Ovary (tissue), 10 donors: ENCODE measurements at regions of chr21 and their contacts with region 1.

Region 1: GRCh38 chr21:37380349-37381323 is 14.1 kb downstream of the DYRK1A start:
- DNase-seq: no peak
- H3K4me3 ChIP-seq: no peak overlapping the region
- H3K27ac ChIP-seq: no peak overlapping the region
- H3K4me1 ChIP-seq: peaks cover 15% of the 10 kb centered on the region
- H3K27me3 ChIP-seq: no peaks in the 10 kb centered on the region
- CTCF ChIP-seq: no peak
- EP300 ChIP-seq: no peak
- POLR2A ChIP-seq: no peak

Region 2: DNA sequence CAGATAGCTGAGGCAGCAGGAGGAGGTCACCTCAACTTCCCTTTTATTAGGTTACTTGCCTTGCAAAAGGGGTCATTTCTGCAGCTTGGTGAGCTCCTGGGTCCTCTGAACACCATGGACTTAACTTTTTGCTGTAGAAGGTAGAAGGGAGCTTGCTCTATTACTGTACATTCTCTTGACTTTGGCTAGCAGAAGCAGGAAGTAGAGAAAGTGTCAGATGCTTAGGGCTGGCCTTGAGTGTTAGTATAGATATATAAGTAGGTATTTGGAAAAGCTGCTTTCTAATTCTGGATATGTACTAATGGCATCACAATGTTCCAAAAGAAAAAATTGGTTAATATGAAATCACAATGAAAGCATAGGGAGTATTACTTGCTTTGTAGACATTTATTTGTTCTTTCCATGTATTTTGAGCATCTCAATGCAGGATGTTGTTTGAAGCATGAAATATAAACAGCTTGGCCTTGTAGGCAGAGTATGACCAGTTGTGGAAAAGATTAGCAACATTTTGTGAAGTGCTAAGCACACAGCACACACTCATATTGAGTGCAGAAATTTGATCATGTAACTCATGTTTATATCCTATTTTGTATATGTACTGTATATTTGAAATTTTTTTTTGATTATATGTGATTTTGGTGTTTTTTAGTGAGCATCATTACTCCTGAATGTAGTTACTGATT is 94.7 kb after region 1 on chr21:
- intact Hi-C with region 1: loop called in 1 of 4 experiments (anchors 10 kb)
- DNase-seq: no peak
- H3K4me3 ChIP-seq: no peak overlapping the region
- H3K27ac ChIP-seq: no peak overlapping the region
- H3K4me1 ChIP-seq: peaks cover 16% of the 10 kb centered on the region
- H3K27me3 ChIP-seq: no peaks in the 10 kb centered on the region
- CTCF ChIP-seq: no peak
- EP300 ChIP-seq: no peak
- POLR2A ChIP-seq: no peak